ENCODE measurements at regions of chr11 and their contacts with region 1.

Region 1: GRCh38 chr11:43680521-43681400 is at the start of gene HSD17B12:
- DNase-seq: peak; percentile 98 to 100 (median 98)
- ATAC-seq: peak; percentile 94
- H3K4me3 ChIP-seq: peak within 1 kb of the TSS; percentile 84
- H3K4me3 Mint-ChIP-seq: peak within 1 kb of the TSS; percentile 89
- H3K27ac ChIP-seq: peak within 1 kb of the TSS; percentile 91 to 92
- H3K27ac Mint-ChIP-seq: peak within 1 kb of the TSS; percentile 98
- H3K4me1 ChIP-seq: peaks cover 15% of the 10 kb centered on the region
- H3K4me1 Mint-ChIP-seq: peaks cover 32% of the 10 kb centered on the region
- H3K27me3 ChIP-seq: no peaks in the 10 kb centered on the region
- H3K27me3 Mint-ChIP-seq: no peaks in the 10 kb centered on the region
- CTCF ChIP-seq: no peak
- total RNA-seq, gene HSD17B12: 13.8 to 14.0 TPM

Region 2: DNA sequence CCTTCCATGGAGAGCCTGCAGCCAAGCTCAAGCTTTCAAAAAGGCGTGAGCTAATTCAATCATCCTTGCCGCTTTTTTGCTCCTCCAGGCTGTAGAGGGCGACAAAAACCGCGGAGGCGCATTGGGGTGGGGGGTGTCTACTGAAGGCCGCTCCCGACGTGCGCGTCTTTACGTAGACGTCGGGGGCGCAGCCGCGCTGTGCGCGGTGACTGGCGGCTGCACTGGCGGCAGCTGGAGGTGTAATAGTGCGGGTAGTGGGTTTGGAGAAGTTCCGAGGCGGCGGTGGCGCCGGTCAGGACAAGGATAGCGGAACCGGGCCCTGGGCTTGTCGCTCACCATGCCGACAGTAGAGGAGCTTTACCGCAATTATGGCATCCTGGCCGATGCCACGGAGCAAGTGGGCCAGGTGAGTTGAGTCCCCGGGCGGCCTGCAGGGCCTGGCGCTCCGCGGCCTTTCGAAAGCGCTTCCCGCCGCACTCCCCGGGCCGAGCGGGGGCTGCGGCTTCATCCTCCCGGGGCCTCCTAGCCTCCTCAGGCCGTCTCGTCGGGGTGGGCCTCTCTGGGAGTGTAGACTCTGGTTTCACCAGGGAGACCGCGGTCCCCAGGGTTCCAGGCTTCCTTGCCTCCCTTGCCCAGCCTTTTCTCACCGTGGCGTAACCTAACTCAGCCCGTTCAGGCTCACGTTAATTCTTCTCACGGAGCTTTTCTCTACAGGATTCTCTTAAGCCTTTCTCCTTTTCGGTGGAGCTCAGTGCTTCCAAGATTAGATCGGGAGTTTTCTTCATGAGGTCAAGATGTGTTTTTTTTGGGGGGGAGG is 368.8 kb before region 1 on chr11 and contains the start of gene API5:
- CTCF ChIA-PET with region 1: no interaction called
- POLR2A ChIA-PET with region 1: interaction called, 5 read pairs
- intact Hi-C with region 1: loop called (anchors 1 to 2 kb)
- DNase-seq: peak; percentile 84 to 96 (median 93)
- ATAC-seq: peak; percentile 94
- H3K4me3 ChIP-seq: peak within 1 kb of the TSS; percentile 84 to 85
- H3K4me3 Mint-ChIP-seq: peak within 1 kb of the TSS; percentile 92
- H3K27ac ChIP-seq: peak within 1 kb of the TSS; percentile 64 to 75
- H3K27ac Mint-ChIP-seq: peak within 1 kb of the TSS; percentile 88
- H3K4me1 ChIP-seq: peaks cover 34% of the 10 kb centered on the region
- H3K4me1 Mint-ChIP-seq: peaks cover 50% of the 10 kb centered on the region
- H3K27me3 ChIP-seq: no peaks in the 10 kb centered on the region
- H3K27me3 Mint-ChIP-seq: no peaks in the 10 kb centered on the region
- CTCF ChIP-seq: peak; percentile 63
- total RNA-seq, gene API5: 78.4 to 80.6 TPM

Region 3: GRCh38 chr11:44065841-44066731 is 385.3 kb after region 1 on chr11 and contains the start of gene ACCS:
- CTCF ChIA-PET with region 1: no interaction called
- POLR2A ChIA-PET with region 1: no interaction called
- intact Hi-C with region 1: loop called in 1 of 2 experiments (anchors 10 kb)
- DNase-seq: peak; percentile 80 to 96 (median 93)
- ATAC-seq: peak; percentile 96
- H3K4me3 ChIP-seq: peak within 1 kb of the TSS; percentile 80 to 83
- H3K4me3 Mint-ChIP-seq: peak within 1 kb of the TSS; percentile 91
- H3K27ac ChIP-seq: peak within 1 kb of the TSS; percentile 70 to 71
- H3K27ac Mint-ChIP-seq: peak within 1 kb of the TSS; percentile 92
- H3K4me1 ChIP-seq: peaks cover 6% of the 10 kb centered on the region
- H3K4me1 Mint-ChIP-seq: peaks cover 30% of the 10 kb centered on the region
- H3K27me3 ChIP-seq: no peaks in the 10 kb centered on the region
- H3K27me3 Mint-ChIP-seq: no peaks in the 10 kb centered on the region
- CTCF ChIP-seq: peak; percentile 83
- total RNA-seq, gene ACCS: 16.7 to 18.1 TPM